GM12878 (cell line): ENCODE measurements at regions of chr1 and their contacts with region 1.

Region 1: DNA sequence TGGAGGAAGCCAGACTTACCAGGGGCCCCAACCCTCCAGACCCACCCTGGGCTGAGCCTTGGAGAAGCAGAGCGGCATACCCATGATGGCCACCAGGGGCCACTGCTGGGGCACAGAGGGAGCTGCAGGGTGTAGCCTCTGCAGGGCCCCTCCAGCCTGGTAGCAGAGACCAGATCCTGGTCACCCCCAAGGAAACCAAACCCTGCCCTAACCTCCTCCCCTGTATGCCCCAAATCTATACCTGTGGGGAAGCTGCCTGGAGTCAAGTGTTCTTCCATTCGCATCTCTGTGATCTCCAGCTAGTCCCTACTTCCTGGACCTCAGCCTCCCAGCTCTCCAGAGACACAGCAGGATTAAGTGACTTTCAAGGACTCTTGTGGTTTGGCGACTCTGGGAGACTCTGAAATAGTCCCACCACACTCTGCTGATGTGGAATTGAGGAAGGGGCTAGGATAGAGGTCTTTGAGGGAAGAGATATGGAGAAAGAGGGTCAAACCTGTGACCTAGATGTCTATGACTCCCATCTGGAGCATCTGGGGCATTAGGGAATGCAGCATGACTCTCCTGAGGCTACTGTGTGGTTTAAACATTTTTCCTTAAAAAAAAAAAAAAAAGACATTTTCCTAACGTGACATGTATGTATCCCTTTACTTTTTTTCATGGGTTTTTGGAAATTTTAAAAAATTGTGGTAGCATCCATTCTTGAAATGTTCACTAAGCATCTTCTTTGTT is 119.2 kb upstream of the IPO9 start:
- DNase-seq: no peak
- ATAC-seq: peak; percentile 99
- H3K4me3 ChIP-seq: no peak overlapping the region
- H3K27ac ChIP-seq: no peak overlapping the region
- H3K4me1 ChIP-seq: peaks cover 4% of the 10 kb centered on the region; the same call in 1 of the 2 replicates
- H3K27me3 ChIP-seq: no peaks in the 10 kb centered on the region
- CTCF ChIP-seq: peak; percentile 80 to 97 (median 85)
- EP300 ChIP-seq: no peak
- POLR2A ChIP-seq: no peak
- RAD21 ChIP-seq: peak; percentile 79

Region 2: GRCh38 chr1:201408176-201408833 is 301.4 kb before region 1 on chr1:
- CTCF ChIA-PET with region 1: no interaction called
- POLR2A ChIA-PET with region 1: no interaction called
- RAD21 ChIA-PET with region 1: no interaction called
- SMC1A ChIA-PET with region 1: no interaction called
- in situ Hi-C with region 1: no loop called
- intact Hi-C with region 1: no loop called
- DNase-seq: no peak
- ATAC-seq: peak; percentile 51
- H3K4me3 ChIP-seq: no peak overlapping the region
- H3K27ac ChIP-seq: no peak overlapping the region
- H3K4me1 ChIP-seq: peaks cover 35% of the 10 kb centered on the region
- H3K27me3 ChIP-seq: no peaks in the 10 kb centered on the region; a peak in 1 of 4 replicates
- CTCF ChIP-seq: peak; percentile 96 to 99 (median 98); a peak in 5 of 6 replicates
- EP300 ChIP-seq: no peak
- POLR2A ChIP-seq: no peak
- RAD21 ChIP-seq: peak; percentile 70

Region 3: GRCh38 chr1:201783572-201783971 is 73.8 kb after region 1 on chr1:
- CTCF ChIA-PET with region 1: interaction called, 332 read pairs
- POLR2A ChIA-PET with region 1: no interaction called
- RAD21 ChIA-PET with region 1: interaction called, 15 read pairs
- SMC1A ChIA-PET with region 1: interaction called, 3 read pairs
- in situ Hi-C with region 1: loop called (anchors 5 kb)
- intact Hi-C with region 1: no loop called
- DNase-seq: no peak
- ATAC-seq: no peak
- H3K4me3 ChIP-seq: no peak overlapping the region
- H3K27ac ChIP-seq: no peak overlapping the region
- H3K4me1 ChIP-seq: no peaks in the 10 kb centered on the region
- H3K27me3 ChIP-seq: peaks cover 0 to 3% of the 10 kb centered on the region in 2 experiments; a peak in 2 of 4 replicates
- CTCF ChIP-seq: 0 out of 6 replicates have a peak, but pooled peaks of 1 of the 3 experiments have one; percentile 2
- EP300 ChIP-seq: no peak
- POLR2A ChIP-seq: no peak
- RAD21 ChIP-seq: peak; percentile 16; the same call in 1 of the 2 replicates

Region 4: GRCh38 chr1:201792534-201793305 is 83.0 kb after region 1 on chr1:
- CTCF ChIA-PET with region 1: interaction called, 332 read pairs
- POLR2A ChIA-PET with region 1: no interaction called
- RAD21 ChIA-PET with region 1: interaction called, 64 read pairs
- SMC1A ChIA-PET with region 1: interaction called, 43 read pairs
- in situ Hi-C with region 1: loop called (anchors 5 kb)
- intact Hi-C with region 1: loop called (anchors 1 kb)
- DNase-seq: no peak
- ATAC-seq: peak; percentile 94
- H3K4me3 ChIP-seq: no peak overlapping the region
- H3K27ac ChIP-seq: no peak overlapping the region
- H3K4me1 ChIP-seq: no peaks in the 10 kb centered on the region
- H3K27me3 ChIP-seq: peaks cover 2% of the 10 kb centered on the region in 2 experiments; a peak in 3 of 4 replicates
- CTCF ChIP-seq: peak; percentile 95 to 97 (median 96); a peak in 5 of 6 replicates
- EP300 ChIP-seq: no peak
- POLR2A ChIP-seq: no peak
- RAD21 ChIP-seq: peak; percentile 96